ENCODE measurements at regions of chr18 and their contacts with region 1.

Region 1: DNA sequence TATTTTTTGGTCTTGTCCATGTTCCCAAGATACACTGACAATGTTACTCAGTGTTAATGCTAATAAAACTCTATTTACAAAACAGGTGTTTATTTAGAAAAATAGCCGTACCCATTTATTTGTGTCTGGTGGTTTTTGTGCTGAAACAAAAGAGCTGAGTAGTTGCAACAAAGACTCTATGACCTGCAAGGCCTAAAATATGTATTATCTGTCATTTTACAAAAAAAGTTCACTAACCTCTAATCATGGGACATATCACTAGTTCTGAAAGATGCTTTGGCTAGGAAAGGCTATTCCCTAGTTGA is 59.2 kb upstream of the SLC25A52 start:
- DNase-seq: no peak
- H3K4me3 ChIP-seq: no peak overlapping the region
- H3K27ac ChIP-seq: no peak overlapping the region
- H3K4me1 ChIP-seq: no peaks in the 10 kb centered on the region
- H3K27me3 ChIP-seq: no peaks in the 10 kb centered on the region
- CTCF ChIP-seq: no peak
- POLR2A ChIP-seq: no peak

Region 2: GRCh38 chr18:31576670-31577069 is 243.2 kb before region 1 on chr18:
- intact Hi-C with region 1: loop called (anchors 10 kb)
- DNase-seq: no peak
- H3K4me3 ChIP-seq: no peak overlapping the region
- H3K27ac ChIP-seq: no peak overlapping the region
- H3K4me1 ChIP-seq: no peaks in the 10 kb centered on the region
- H3K27me3 ChIP-seq: no peaks in the 10 kb centered on the region
- CTCF ChIP-seq: no peak
- POLR2A ChIP-seq: no peak